ENCODE measurements at regions of chr3 and their contacts with region 1.

Region 1: DNA sequence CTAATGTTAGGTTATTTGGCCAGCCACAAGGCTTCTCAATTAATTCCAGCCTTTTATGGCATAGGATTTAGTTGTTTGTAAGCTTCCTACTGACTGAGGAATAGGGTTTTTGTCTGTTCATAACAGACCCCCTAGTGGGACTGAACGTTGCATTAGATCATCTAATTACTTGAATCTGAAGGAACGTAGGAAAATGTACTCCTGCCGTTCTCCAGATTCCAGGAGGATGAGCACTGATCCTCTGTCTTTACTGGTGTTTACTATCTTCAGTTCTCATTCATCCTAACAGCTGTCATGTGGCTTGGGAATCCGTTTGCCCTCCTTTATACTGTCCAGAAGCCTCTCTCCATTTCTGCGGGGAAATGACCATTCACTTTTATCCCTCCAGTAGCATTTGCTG is 52.7 kb downstream of the RAD54L2 start:
- DNase-seq: no peak
- H3K4me3 ChIP-seq: no peak overlapping the region
- CTCF ChIP-seq: no peak

Region 2: GRCh38 chr3:51295625-51296024 is 295.6 kb before region 1 on chr3:
- in situ Hi-C with region 1: no loop called
- DNase-seq: no peak
- H3K4me3 ChIP-seq: no peak overlapping the region
- CTCF ChIP-seq: no peak

Region 3: GRCh38 chr3:51530490-51530889 is 60.7 kb before region 1 on chr3:
- in situ Hi-C with region 1: loop called (anchors 5 kb)
- DNase-seq: no peak
- H3K4me3 ChIP-seq: no peak overlapping the region
- CTCF ChIP-seq: no peak

Measured in astrocyte of the cerebellum (primary cell).